ENCODE measurements at regions of chrX and their contacts with region 1.

Region 1: DNA sequence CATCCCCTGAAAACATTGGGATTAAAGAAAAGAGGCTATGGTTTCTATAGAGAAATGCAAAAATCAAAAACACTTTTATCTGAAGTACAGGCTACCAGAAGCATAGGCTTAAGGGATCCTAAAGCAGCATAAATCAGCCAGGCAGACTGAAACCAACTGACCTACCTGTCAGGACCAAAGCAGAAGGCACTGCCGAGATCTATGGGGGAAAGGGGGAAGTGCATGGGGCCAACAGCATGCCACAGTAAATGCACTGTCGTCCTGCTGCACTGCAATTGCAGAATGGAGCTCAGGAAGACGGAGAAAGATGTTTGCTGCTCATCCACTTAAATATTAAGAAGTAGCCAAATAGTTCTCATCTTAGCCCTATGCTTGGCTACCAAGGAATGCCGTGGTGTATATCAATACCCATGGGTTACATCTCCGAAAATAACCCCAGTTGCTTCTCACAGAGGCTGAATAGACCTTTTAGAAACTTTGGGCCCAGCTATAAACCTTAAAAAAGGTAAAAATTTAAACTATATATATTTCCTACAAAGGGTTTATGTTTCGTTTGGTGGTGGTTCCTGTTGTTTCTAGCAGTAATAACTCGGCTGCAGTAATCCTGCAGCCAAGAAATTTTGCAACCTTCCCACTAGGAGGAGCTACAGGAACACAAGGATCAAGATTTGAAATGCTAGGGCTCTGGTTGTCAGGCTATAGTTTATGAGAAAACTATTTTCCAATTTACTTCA is 312.2 kb upstream of the DIAPH2 start:
- DNase-seq: peak; percentile 7 to 51
- H3K4me3 ChIP-seq: no peak overlapping the region
- H3K27ac ChIP-seq: no peak overlapping the region
- H3K4me1 ChIP-seq: peaks cover 5% of the 10 kb centered on the region; the same call in 1 of the 2 replicates
- H3K27me3 ChIP-seq: no peaks in the 10 kb centered on the region
- CTCF ChIP-seq: peak; percentile 78

Region 2: GRCh38 chrX:96224279-96224678 is 148.2 kb before region 1 on chrX:
- CTCF ChIA-PET with region 1: no interaction called
- POLR2A ChIA-PET with region 1: no interaction called
- intact Hi-C with region 1: no loop called
- DNase-seq: no peak
- H3K4me3 ChIP-seq: no peak overlapping the region
- H3K27ac ChIP-seq: no peak overlapping the region
- H3K4me1 ChIP-seq: no peaks in the 10 kb centered on the region
- H3K27me3 ChIP-seq: no peaks in the 10 kb centered on the region
- CTCF ChIP-seq: no peak

Region 3: DNA sequence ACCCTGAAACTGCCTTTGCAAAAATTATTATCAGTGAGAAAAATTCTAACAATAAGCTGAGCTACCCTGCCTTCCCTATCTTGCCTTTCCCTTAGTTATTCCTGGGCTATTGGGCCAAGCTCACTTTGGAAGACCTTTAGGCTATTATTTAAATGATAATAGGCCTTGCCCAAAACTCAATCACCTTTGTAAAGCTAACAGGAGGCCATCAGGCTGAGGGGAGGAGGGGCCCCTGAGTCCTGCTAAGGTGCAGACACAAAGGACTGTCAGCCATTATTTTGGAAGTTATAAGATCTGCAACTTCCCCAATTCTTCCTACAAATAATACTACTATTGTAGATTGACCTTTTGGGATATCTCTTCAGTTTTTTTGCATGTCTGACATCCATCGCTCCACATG is 33.4 kb after region 1 on chrX:
- CTCF ChIA-PET with region 1: no interaction called
- POLR2A ChIA-PET with region 1: no interaction called
- intact Hi-C with region 1: no loop called
- DNase-seq: no peak
- H3K4me3 ChIP-seq: no peak overlapping the region
- H3K27ac ChIP-seq: peak overlapping the region; percentile 84; the same call in 1 of the 2 replicates
- H3K4me1 ChIP-seq: peaks cover 36% of the 10 kb centered on the region
- H3K27me3 ChIP-seq: no peaks in the 10 kb centered on the region
- CTCF ChIP-seq: no peak

Region 4: GRCh38 chrX:96436105-96436504 is 63.6 kb after region 1 on chrX:
- CTCF ChIA-PET with region 1: no interaction called
- POLR2A ChIA-PET with region 1: no interaction called
- intact Hi-C with region 1: no loop called
- DNase-seq: peak in 1 of 2 experiments; percentile 35
- H3K4me3 ChIP-seq: no peak overlapping the region
- H3K27ac ChIP-seq: peak overlapping the region; percentile 12; the same call in 1 of the 2 replicates
- H3K4me1 ChIP-seq: peaks cover 25% of the 10 kb centered on the region; the same call in 1 of the 2 replicates
- H3K27me3 ChIP-seq: no peaks in the 10 kb centered on the region
- CTCF ChIP-seq: no peak

Region 5: DNA sequence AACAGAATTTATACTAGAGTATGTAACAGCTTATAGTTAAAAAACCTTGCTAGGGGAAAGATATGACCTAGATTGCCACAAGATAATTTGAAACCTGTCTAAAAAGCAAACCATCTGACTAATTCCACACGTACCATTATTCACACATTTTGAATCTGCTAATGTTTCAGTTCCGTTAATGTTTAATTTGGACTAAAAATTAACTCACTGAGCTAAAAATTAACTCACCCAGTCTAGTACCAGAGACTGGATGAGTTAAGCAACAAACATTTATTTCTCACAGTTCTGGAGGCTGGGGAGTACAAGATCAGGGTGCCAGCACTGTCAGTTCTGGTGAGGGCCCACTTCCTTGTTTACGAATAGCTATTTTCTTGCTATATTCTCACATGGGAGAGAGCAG is 80.7 kb after region 1 on chrX:
- CTCF ChIA-PET with region 1: no interaction called
- POLR2A ChIA-PET with region 1: no interaction called
- intact Hi-C with region 1: no loop called
- DNase-seq: no peak
- H3K4me3 ChIP-seq: no peak overlapping the region
- H3K27ac ChIP-seq: no peak overlapping the region
- H3K4me1 ChIP-seq: no peaks in the 10 kb centered on the region
- H3K27me3 ChIP-seq: no peaks in the 10 kb centered on the region
- CTCF ChIP-seq: no peak

Region 6: DNA sequence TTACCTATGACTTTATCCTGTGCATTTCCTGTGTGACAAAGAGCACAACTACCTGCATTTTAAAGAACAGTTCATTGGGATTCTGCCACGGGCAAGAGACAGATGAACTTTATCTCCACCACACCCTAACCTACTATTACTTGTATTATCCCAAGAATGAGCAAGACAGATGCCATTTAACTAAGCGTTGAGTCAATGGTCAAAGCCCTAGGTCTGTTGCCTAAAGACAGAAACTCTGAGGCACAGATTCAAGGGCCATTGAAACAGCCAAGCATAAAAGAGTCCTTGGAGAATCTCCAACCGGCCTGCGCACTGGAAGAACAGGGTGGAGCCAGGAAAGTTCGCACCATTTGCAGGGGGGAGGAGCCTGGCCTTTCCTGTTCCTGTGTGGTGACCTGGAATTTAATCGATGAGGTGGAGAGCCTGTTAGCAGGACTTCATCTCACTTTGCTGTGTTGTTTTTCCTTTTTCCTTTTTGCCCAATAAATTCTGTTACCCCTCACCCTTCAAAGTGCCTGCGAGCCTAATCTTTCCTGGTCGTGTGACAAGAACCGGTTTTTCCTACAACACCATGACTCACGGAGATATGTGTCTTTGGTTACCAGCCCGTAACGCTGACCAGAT is 165.7 kb after region 1 on chrX:
- CTCF ChIA-PET with region 1: no interaction called
- POLR2A ChIA-PET with region 1: no interaction called
- intact Hi-C with region 1: loop called (anchors 1 kb)
- DNase-seq: peak; percentile 40 to 90
- H3K4me3 ChIP-seq: peak overlapping the region; percentile 43; the same call in 1 of the 2 replicates
- H3K27ac ChIP-seq: peak overlapping the region; percentile 93
- H3K4me1 ChIP-seq: peaks cover 38% of the 10 kb centered on the region
- H3K27me3 ChIP-seq: no peaks in the 10 kb centered on the region
- CTCF ChIP-seq: no peak

Region 7: GRCh38 chrX:96684339-96685209 is 312.1 kb after region 1 on chrX and contains the start of gene DIAPH2:
- CTCF ChIA-PET with region 1: no interaction called
- POLR2A ChIA-PET with region 1: interaction called, 7 read pairs
- intact Hi-C with region 1: loop called (anchors 10 kb)
- DNase-seq: peak; percentile 72 to 75
- H3K4me3 ChIP-seq: peak within 1 kb of the TSS; percentile 87
- H3K27ac ChIP-seq: peak within 1 kb of the TSS; percentile 87
- H3K4me1 ChIP-seq: peaks cover 19% of the 10 kb centered on the region
- H3K27me3 ChIP-seq: no peaks in the 10 kb centered on the region
- CTCF ChIP-seq: peak; percentile 37; the same call in 1 of the 2 replicates
- total RNA-seq, gene DIAPH2: 10.6 and 12.0 TPM in 2 replicates

Region 8: GRCh38 chrX:96752781-96753180 is 380.3 kb after region 1 on chrX:
- CTCF ChIA-PET with region 1: no interaction called
- POLR2A ChIA-PET with region 1: no interaction called
- intact Hi-C with region 1: loop called (anchors 5 kb)
- DNase-seq: no peak
- H3K4me3 ChIP-seq: no peak overlapping the region
- H3K27ac ChIP-seq: no peak overlapping the region
- H3K4me1 ChIP-seq: no peaks in the 10 kb centered on the region
- H3K27me3 ChIP-seq: no peaks in the 10 kb centered on the region
- CTCF ChIP-seq: no peak

Region 9: GRCh38 chrX:96770315-96770714 is 397.8 kb after region 1 on chrX:
- CTCF ChIA-PET with region 1: interaction called, 3 read pairs
- POLR2A ChIA-PET with region 1: no interaction called
- intact Hi-C with region 1: loop called (anchors 2 kb)
- DNase-seq: no peak
- H3K4me3 ChIP-seq: no peak overlapping the region
- H3K27ac ChIP-seq: no peak overlapping the region
- H3K4me1 ChIP-seq: no peaks in the 10 kb centered on the region
- H3K27me3 ChIP-seq: no peaks in the 10 kb centered on the region
- CTCF ChIP-seq: peak; percentile 49; the same call in 1 of the 2 replicates